ENCODE measurements at regions of chr11 and their contacts with region 1.

Region 1: GRCh38 chr11:10255388-10256125 is 38.5 kb downstream of the SBF2 start:
- DNase-seq: peak; percentile 63
- ATAC-seq: peak; percentile 72
- H3K4me3 ChIP-seq: no peak overlapping the region
- H3K27ac ChIP-seq: no peak overlapping the region; the same call in 1 of the 2 replicates
- H3K4me1 ChIP-seq: peaks cover 5% of the 10 kb centered on the region
- H3K27me3 ChIP-seq: no peaks in the 10 kb centered on the region
- CTCF ChIP-seq: no peak
- POLR2A ChIP-seq: no peak
- RAD21 ChIP-seq: no peak

Region 2: GRCh38 chr11:10236850-10237249 is 18.7 kb before region 1 on chr11:
- CTCF ChIA-PET with region 1: no interaction called
- POLR2A ChIA-PET with region 1: no interaction called
- dilution Hi-C with region 1: no loop called
- in situ Hi-C with region 1: no loop called
- intact Hi-C with region 1: loop called (anchors 2 kb)
- DNase-seq: no peak
- ATAC-seq: no peak
- H3K4me3 ChIP-seq: no peak overlapping the region
- H3K27ac ChIP-seq: no peak overlapping the region
- H3K4me1 ChIP-seq: peaks cover 2% of the 10 kb centered on the region
- H3K27me3 ChIP-seq: no peaks in the 10 kb centered on the region
- CTCF ChIP-seq: no peak
- POLR2A ChIP-seq: no peak
- RAD21 ChIP-seq: no peak

Region 3: GRCh38 chr11:10293423-10294289 is 38.1 kb after region 1 on chr11 and contains the start of gene SBF2:
- CTCF ChIA-PET with region 1: no interaction called
- POLR2A ChIA-PET with region 1: no interaction called
- dilution Hi-C with region 1: no loop called
- in situ Hi-C with region 1: no loop called
- intact Hi-C with region 1: loop called (anchors 5 kb)
- DNase-seq: peak; percentile 96
- ATAC-seq: peak; percentile 79
- H3K4me3 ChIP-seq: peak within 1 kb of the TSS; percentile 85
- H3K27ac ChIP-seq: peak within 1 kb of the TSS; percentile 93
- H3K4me1 ChIP-seq: peaks cover 10% of the 10 kb centered on the region
- H3K27me3 ChIP-seq: no peaks in the 10 kb centered on the region
- CTCF ChIP-seq: no peak
- POLR2A ChIP-seq: peak; percentile 97
- RAD21 ChIP-seq: no peak
- total RNA-seq, gene SBF2: 45.8 and 51.8 TPM in 2 replicates

Measured in IMR-90 (cell line).